ENCODE measurements at regions of chr1 and their contacts with region 1.

Region 1: GRCh38 chr1:45569962-45570581 is 13.8 kb upstream of the NASP start:
- DNase-seq: peak; percentile 33 to 83 (median 72)
- ATAC-seq: peak; percentile 99
- H3K4me3 ChIP-seq: no peak overlapping the region
- H3K4me3 Mint-ChIP-seq: no peak overlapping the region
- H3K27ac ChIP-seq: no peak overlapping the region
- H3K27ac Mint-ChIP-seq: peak overlapping the region; percentile 22
- H3K4me1 ChIP-seq: no peaks in the 10 kb centered on the region
- H3K4me1 Mint-ChIP-seq: no peaks in the 10 kb centered on the region
- H3K27me3 ChIP-seq: no peaks in the 10 kb centered on the region
- H3K27me3 Mint-ChIP-seq: no peaks in the 10 kb centered on the region
- CTCF ChIP-seq: peak; percentile 92

Region 2: DNA sequence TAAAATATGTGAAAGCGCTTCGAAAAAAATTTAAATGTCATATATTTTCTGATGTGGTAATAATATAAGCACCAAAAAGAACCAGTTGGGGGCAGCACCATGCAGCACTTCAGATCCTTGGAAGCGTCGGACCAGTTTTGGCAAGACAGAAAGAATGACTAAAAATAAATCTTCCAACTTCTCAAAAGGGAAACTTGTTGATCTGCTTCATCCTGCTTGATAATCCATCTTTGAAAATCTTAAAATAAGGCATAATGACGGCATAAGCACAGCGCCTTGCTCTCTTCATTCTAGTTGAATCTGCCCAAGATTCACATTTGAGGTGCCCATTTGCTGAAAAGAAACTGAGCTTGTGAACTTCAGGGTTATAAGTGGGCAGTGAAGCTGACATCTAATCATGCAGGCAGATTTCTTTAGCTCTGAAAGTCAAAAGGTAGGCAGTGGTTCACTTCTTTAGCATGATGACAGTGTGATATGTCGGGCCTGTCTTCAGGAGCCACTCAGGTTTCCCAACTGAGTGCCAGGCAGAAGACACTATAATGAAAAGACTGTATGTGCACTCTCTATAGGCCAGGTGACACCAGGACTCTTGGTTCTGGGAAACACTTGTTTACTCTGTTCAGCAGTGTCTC is 210.1 kb before region 1 on chr1:
- CTCF ChIA-PET with region 1: interaction called, 26 read pairs
- POLR2A ChIA-PET with region 1: no interaction called
- intact Hi-C with region 1: loop called (anchors 1 kb)
- DNase-seq: peak in 7 of 9 experiments; percentile 16 to 70 (median 47)
- ATAC-seq: peak; percentile 55
- H3K4me3 ChIP-seq: no peak overlapping the region
- H3K4me3 Mint-ChIP-seq: no peak overlapping the region
- H3K27ac ChIP-seq: no peak overlapping the region
- H3K27ac Mint-ChIP-seq: no peak overlapping the region
- H3K4me1 ChIP-seq: no peaks in the 10 kb centered on the region
- H3K4me1 Mint-ChIP-seq: peaks cover 6% of the 10 kb centered on the region
- H3K27me3 ChIP-seq: no peaks in the 10 kb centered on the region
- H3K27me3 Mint-ChIP-seq: no peaks in the 10 kb centered on the region
- CTCF ChIP-seq: peak; percentile 55

Region 3: GRCh38 chr1:45521398-45522323 is 48.4 kb before region 1 on chr1 and contains the start of gene PRDX1:
- CTCF ChIA-PET with region 1: interaction called, 41 read pairs
- POLR2A ChIA-PET with region 1: interaction called, 10 read pairs
- intact Hi-C with region 1: loop called in 1 of 2 experiments (anchors 1 kb)
- DNase-seq: peak; percentile 90 to 98 (median 93)
- ATAC-seq: peak; percentile 90
- H3K4me3 ChIP-seq: peak within 1 kb of the TSS; percentile 86 to 99
- H3K4me3 Mint-ChIP-seq: peak within 1 kb of the TSS; percentile 94
- H3K27ac ChIP-seq: peak within 1 kb of the TSS; percentile 75 to 78
- H3K27ac Mint-ChIP-seq: peak within 1 kb of the TSS; percentile 90
- H3K4me1 ChIP-seq: peaks cover 15% of the 10 kb centered on the region
- H3K4me1 Mint-ChIP-seq: peaks cover 26% of the 10 kb centered on the region
- H3K27me3 ChIP-seq: peaks cover 0 to 3% of the 10 kb centered on the region in 2 experiments
- H3K27me3 Mint-ChIP-seq: no peaks in the 10 kb centered on the region
- CTCF ChIP-seq: no peak
- total RNA-seq, gene PRDX1: 20.4 to 27.0 TPM

Region 4: GRCh38 chr1:45550401-45551351 is 19.4 kb before region 1 on chr1 and contains the start of gene AKR1A1:
- CTCF ChIA-PET with region 1: interaction called, 9 read pairs
- POLR2A ChIA-PET with region 1: no interaction called
- intact Hi-C with region 1: loop called in 1 of 2 experiments (anchors 2 kb)
- DNase-seq: peak; percentile 71 to 93 (median 83)
- ATAC-seq: peak; percentile 94
- H3K4me3 ChIP-seq: peak within 1 kb of the TSS; percentile 85 to 96
- H3K4me3 Mint-ChIP-seq: peak within 1 kb of the TSS; percentile 95
- H3K27ac ChIP-seq: peak within 1 kb of the TSS; percentile 76 to 91
- H3K27ac Mint-ChIP-seq: peak within 1 kb of the TSS; percentile 93
- H3K4me1 ChIP-seq: peaks cover 16% of the 10 kb centered on the region
- H3K4me1 Mint-ChIP-seq: peaks cover 23% of the 10 kb centered on the region
- H3K27me3 ChIP-seq: no peaks in the 10 kb centered on the region
- H3K27me3 Mint-ChIP-seq: no peaks in the 10 kb centered on the region
- CTCF ChIP-seq: no peak
- total RNA-seq, gene AKR1A1: 27.2 to 31.9 TPM

Region 5: GRCh38 chr1:45557422-45557944 is 12.6 kb before region 1 on chr1:
- CTCF ChIA-PET with region 1: interaction called, 18 read pairs
- POLR2A ChIA-PET with region 1: no interaction called
- intact Hi-C with region 1: no loop called
- DNase-seq: no peak
- ATAC-seq: no peak
- H3K4me3 ChIP-seq: no peak overlapping the region
- H3K4me3 Mint-ChIP-seq: no peak overlapping the region
- H3K27ac ChIP-seq: no peak overlapping the region
- H3K27ac Mint-ChIP-seq: no peak overlapping the region
- H3K4me1 ChIP-seq: peaks cover 2% of the 10 kb centered on the region
- H3K4me1 Mint-ChIP-seq: peaks cover 7% of the 10 kb centered on the region
- H3K27me3 ChIP-seq: no peaks in the 10 kb centered on the region
- H3K27me3 Mint-ChIP-seq: no peaks in the 10 kb centered on the region
- CTCF ChIP-seq: no peak

Region 6: GRCh38 chr1:47416319-47417169 is 1846.5 kb after region 1 on chr1:
- CTCF ChIA-PET with region 1: no interaction called
- POLR2A ChIA-PET with region 1: no interaction called
- intact Hi-C with region 1: no loop called
- DNase-seq: no peak
- ATAC-seq: no peak
- H3K4me3 ChIP-seq: no peak overlapping the region
- H3K4me3 Mint-ChIP-seq: peak overlapping the region; percentile 43
- H3K27ac ChIP-seq: no peak overlapping the region
- H3K27ac Mint-ChIP-seq: no peak overlapping the region
- H3K4me1 ChIP-seq: no peaks in the 10 kb centered on the region
- H3K4me1 Mint-ChIP-seq: peaks cover 5% of the 10 kb centered on the region
- H3K27me3 ChIP-seq: peaks cover 13 to 19% of the 10 kb centered on the region in 2 experiments
- H3K27me3 Mint-ChIP-seq: peaks cover 49% of the 10 kb centered on the region
- CTCF ChIP-seq: no peak